ENCODE measurements at regions of chr3 and their contacts with region 1.

Region 1: GRCh38 chr3:129336093-129336709 is 57.5 kb downstream of the HMCES start:
- DNase-seq: no peak
- H3K4me3 ChIP-seq: no peak overlapping the region
- H3K27ac ChIP-seq: no peak overlapping the region
- H3K4me1 ChIP-seq: no peaks in the 10 kb centered on the region
- H3K27me3 ChIP-seq: peaks cover 0 to 1% (median 0%) of the 10 kb centered on the region in 4 experiments; a peak in 1 of 7 replicates
- CTCF ChIP-seq: no peak
- EP300 ChIP-seq: no peak
- POLR2A ChIP-seq: no peak
- RAD21 ChIP-seq: no peak

Region 2: GRCh38 chr3:129352045-129352444 is 15.8 kb after region 1 on chr3:
- CTCF ChIA-PET with region 1: interaction called, 12 read pairs
- POLR2A ChIA-PET with region 1: interaction called, 3 read pairs
- DNase-seq: peak in 1 of 2 experiments; percentile 62
- H3K4me3 ChIP-seq: no peak overlapping the region
- H3K27ac ChIP-seq: no peak overlapping the region
- H3K4me1 ChIP-seq: peaks cover 0 to 7% (median 1%) of the 10 kb centered on the region in 4 experiments; a peak in 3 of 7 replicates
- H3K27me3 ChIP-seq: no peaks in the 10 kb centered on the region
- CTCF ChIP-seq: peak; percentile 43 to 67 (median 59)
- EP300 ChIP-seq: no peak
- POLR2A ChIP-seq: no peak
- RAD21 ChIP-seq: peak in 1 of 2 experiments; percentile 33; a peak in 2 of 4 replicates

Region 3: DNA sequence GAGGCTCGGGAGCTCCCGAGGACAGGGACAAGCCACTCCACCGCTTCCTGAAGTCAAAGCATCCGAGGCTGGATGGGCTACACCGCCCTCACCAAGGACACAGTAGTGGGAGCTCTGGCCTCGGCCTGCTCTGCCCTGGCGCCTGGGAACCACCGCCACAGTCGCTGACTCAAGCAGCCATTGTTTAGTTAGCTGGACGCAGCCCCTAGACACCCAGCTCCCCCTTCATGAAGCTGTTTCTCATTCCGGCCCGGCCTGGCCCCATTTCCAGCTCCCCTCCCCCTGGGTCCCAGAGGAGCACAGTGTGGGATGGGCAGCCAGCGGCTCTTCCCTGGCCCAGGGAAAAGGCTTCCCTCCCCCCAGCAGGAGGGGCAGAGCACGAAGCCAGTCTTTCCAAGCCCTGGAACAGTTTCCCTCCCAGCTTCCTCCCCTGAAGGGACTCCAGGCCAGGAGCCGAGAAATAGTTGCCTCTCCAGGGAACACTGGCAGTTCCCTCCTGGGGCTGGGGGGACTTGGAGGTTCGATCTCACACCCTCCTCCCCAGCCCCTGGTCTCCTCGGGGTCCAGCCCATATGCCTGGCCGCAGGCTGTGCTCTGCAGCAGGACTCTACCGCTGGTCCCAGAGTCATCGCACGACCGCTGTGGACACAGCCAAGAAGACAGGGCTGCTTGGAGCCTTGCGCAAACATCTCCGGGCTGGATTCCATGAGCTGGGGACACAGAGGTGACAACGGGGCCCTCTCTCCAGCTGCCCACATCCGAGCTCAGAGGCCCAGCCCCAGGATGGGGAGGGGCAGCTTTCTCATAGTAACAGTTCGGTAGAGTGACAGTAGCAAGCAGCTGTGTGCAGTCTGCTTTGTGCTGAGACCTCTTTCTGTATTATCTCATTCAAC is 260.2 kb after region 1 on chr3:
- CTCF ChIA-PET with region 1: no interaction called
- POLR2A ChIA-PET with region 1: no interaction called
- DNase-seq: no peak
- H3K4me3 ChIP-seq: no peak overlapping the region
- H3K27ac ChIP-seq: no peak overlapping the region
- H3K4me1 ChIP-seq: peaks cover 18 to 63% (median 56%) of the 10 kb centered on the region in 4 experiments
- H3K27me3 ChIP-seq: no peaks in the 10 kb centered on the region
- CTCF ChIP-seq: no peak
- EP300 ChIP-seq: no peak
- POLR2A ChIP-seq: no peak
- RAD21 ChIP-seq: no peak